PC-9 (cell line): ENCODE measurements at regions of chr7 and their contacts with region 1.

Region 1: GRCh38 chr7:129210256-129210988 is 14.4 kb upstream of the AHCYL2 start:
- DNase-seq: peak in 1 of 2 experiments; percentile 82
- H3K4me3 ChIP-seq: no peak overlapping the region
- H3K27ac ChIP-seq: no peak overlapping the region
- H3K4me1 ChIP-seq: no peaks in the 10 kb centered on the region
- H3K27me3 ChIP-seq: no peaks in the 10 kb centered on the region
- CTCF ChIP-seq: peak; percentile 84

Region 2: GRCh38 chr7:128347647-128348097 is 862.8 kb before region 1 on chr7:
- CTCF ChIA-PET with region 1: no interaction called
- POLR2A ChIA-PET with region 1: no interaction called
- intact Hi-C with region 1: loop called (anchors 5 kb)
- DNase-seq: peak; percentile 52 to 62
- H3K4me3 ChIP-seq: no peak overlapping the region
- H3K27ac ChIP-seq: no peak overlapping the region
- H3K4me1 ChIP-seq: peaks cover 13% of the 10 kb centered on the region
- H3K27me3 ChIP-seq: no peaks in the 10 kb centered on the region
- CTCF ChIP-seq: peak; percentile 88

Region 3: GRCh38 chr7:128425850-128426249 is 784.6 kb before region 1 on chr7:
- CTCF ChIA-PET with region 1: interaction called, 3 read pairs
- POLR2A ChIA-PET with region 1: no interaction called
- intact Hi-C with region 1: loop called (anchors 5 kb)
- DNase-seq: peak in 1 of 2 experiments; percentile 80
- H3K4me3 ChIP-seq: no peak overlapping the region
- H3K27ac ChIP-seq: no peak overlapping the region
- H3K4me1 ChIP-seq: peaks cover 30% of the 10 kb centered on the region
- H3K27me3 ChIP-seq: no peaks in the 10 kb centered on the region
- CTCF ChIP-seq: peak; percentile 95

Region 4: DNA sequence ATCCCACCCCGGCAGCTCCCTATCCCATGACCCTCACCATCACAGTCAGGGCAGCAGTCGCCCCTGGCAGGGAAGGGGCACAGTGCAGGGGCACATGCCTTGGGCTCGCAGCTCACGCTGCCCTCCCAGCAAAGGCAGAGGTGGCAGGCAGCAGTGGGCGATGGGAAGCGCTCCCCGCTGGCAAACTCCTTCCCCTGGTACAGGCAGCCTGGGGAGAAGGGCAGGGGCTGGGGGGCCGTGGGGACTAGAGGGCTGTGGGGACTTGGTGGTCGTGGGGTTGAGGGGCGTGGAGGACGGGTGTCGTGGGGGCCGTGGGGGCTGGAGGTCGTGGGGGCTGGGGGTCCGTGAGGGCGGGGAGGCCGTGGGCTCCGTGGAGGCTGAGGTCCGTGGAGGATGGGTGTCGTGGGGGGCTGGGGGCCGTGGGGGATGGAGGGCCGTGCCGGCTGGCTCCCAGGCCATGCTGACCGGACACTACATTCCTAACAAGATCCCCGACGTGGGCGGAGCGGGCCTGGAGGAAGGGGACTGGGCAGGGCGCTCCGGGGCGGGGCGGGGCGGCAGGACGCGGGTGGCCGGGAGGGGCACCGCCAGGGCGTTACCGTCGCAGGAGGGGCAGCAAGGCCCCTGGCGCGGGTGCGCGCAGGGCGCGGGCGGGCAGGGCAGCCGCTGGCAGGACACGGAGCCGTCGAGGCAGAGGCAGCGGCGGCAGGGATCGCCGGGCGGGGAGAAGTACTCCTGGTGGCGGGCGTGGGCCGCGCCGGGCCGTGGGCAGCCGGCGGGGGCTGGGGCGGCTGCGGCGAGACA is 319.9 kb before region 1 on chr7:
- CTCF ChIA-PET with region 1: no interaction called
- POLR2A ChIA-PET with region 1: no interaction called
- intact Hi-C with region 1: loop called (anchors 5 kb)
- DNase-seq: peak; percentile 80 to 94
- H3K4me3 ChIP-seq: peak overlapping the region; percentile 95
- H3K27ac ChIP-seq: peak overlapping the region; percentile 94
- H3K4me1 ChIP-seq: peaks cover 62% of the 10 kb centered on the region
- H3K27me3 ChIP-seq: no peaks in the 10 kb centered on the region
- CTCF ChIP-seq: no peak

Region 5: DNA sequence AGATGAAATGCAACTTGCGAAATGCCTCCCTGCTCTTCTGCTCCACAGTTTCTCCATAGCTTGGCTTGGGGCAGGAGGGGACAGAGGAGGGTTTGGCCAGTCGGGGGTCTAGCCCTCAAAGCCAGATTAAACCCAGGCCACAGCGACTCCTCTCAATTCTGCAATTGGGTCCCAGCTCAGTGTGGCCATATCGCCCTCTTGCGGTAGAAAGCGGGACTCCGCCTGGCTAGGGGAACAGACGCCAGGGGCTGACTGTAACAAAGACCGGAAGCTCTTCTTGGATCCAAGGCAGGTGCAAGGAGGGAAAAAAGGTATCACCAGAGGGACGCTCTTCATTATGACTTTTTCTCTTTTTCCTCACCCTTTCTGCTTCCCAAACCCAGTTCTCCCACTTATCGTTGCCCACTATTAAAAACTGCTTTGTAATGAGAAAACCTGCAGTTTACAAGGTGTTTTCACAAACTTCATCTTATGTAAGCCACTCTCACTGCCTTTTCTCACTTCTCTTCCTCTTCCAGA is 118.9 kb before region 1 on chr7:
- CTCF ChIA-PET with region 1: interaction called, 3 read pairs
- POLR2A ChIA-PET with region 1: no interaction called
- intact Hi-C with region 1: loop called (anchors 2 kb)
- DNase-seq: peak; percentile 51 to 90
- H3K4me3 ChIP-seq: no peak overlapping the region
- H3K27ac ChIP-seq: no peak overlapping the region
- H3K4me1 ChIP-seq: no peaks in the 10 kb centered on the region
- H3K27me3 ChIP-seq: no peaks in the 10 kb centered on the region
- CTCF ChIP-seq: peak; percentile 94

Region 6: GRCh38 chr7:129098409-129099084 is 111.9 kb before region 1 on chr7:
- CTCF ChIA-PET with region 1: interaction called, 11 read pairs
- POLR2A ChIA-PET with region 1: no interaction called
- intact Hi-C with region 1: no loop called
- DNase-seq: no peak
- H3K4me3 ChIP-seq: no peak overlapping the region
- H3K27ac ChIP-seq: no peak overlapping the region
- H3K4me1 ChIP-seq: no peaks in the 10 kb centered on the region
- H3K27me3 ChIP-seq: no peaks in the 10 kb centered on the region
- CTCF ChIP-seq: no peak

Region 7: DNA sequence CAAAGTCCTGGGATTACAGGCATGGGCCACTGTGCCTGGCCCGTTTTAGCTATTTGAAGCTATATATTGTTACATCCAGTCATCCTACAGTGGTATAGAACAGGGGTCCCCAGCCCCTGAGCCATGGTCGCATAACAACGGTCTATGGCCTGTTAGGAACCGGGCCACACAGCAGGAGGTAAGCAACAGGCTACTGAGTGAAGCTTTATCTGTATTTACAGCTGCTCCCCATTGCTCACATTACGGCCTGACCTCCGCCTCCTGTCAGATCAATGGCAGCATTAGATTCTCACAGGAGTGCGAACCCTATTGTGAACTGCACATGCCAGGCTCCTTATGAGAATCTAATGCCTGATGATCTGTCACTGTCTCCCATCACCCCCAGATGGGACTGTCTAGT is 92.2 kb before region 1 on chr7:
- CTCF ChIA-PET with region 1: no interaction called
- POLR2A ChIA-PET with region 1: no interaction called
- intact Hi-C with region 1: no loop called
- DNase-seq: no peak
- H3K4me3 ChIP-seq: no peak overlapping the region
- H3K27ac ChIP-seq: no peak overlapping the region
- H3K4me1 ChIP-seq: no peaks in the 10 kb centered on the region
- H3K27me3 ChIP-seq: no peaks in the 10 kb centered on the region
- CTCF ChIP-seq: no peak

Region 8: GRCh38 chr7:129163875-129164544 is 46.4 kb before region 1 on chr7:
- CTCF ChIA-PET with region 1: interaction called, 21 read pairs
- POLR2A ChIA-PET with region 1: no interaction called
- intact Hi-C with region 1: loop called (anchors 1 kb)
- DNase-seq: no peak
- H3K4me3 ChIP-seq: no peak overlapping the region
- H3K27ac ChIP-seq: no peak overlapping the region
- H3K4me1 ChIP-seq: no peaks in the 10 kb centered on the region
- H3K27me3 ChIP-seq: no peaks in the 10 kb centered on the region
- CTCF ChIP-seq: peak; percentile 87

Region 9: DNA sequence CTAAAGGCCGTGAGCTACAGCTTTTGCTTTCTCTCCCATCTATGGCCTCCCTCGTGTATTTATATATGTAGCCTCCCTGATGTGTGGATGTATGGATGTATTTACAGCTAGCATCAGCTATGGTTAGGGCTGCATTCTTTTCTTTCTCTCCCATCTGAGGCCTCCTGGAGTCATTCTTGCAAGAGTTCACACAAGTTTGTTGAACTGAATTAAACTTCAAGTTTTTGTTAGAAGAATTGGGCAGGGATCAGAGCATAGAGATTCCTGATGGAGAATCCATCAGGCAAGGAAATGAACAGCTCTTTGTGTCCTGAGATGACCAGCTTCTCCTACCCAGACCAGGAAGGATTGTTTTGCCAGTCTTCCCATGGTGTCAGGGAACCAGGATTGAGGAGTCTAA is 74.7 kb after region 1 on chr7:
- CTCF ChIA-PET with region 1: no interaction called
- POLR2A ChIA-PET with region 1: no interaction called
- intact Hi-C with region 1: no loop called
- DNase-seq: no peak
- H3K4me3 ChIP-seq: no peak overlapping the region
- H3K27ac ChIP-seq: no peak overlapping the region
- H3K4me1 ChIP-seq: no peaks in the 10 kb centered on the region
- H3K27me3 ChIP-seq: no peaks in the 10 kb centered on the region
- CTCF ChIP-seq: no peak